ENCODE measurements at regions of chr7 and their contacts with region 1.

Region 1: GRCh38 chr7:24318326-24318725 is 34.3 kb downstream of the NPY start:
- DNase-seq: peak in 1 of 2 experiments; percentile 10
- H3K4me3 ChIP-seq: no peak overlapping the region
- H3K27ac ChIP-seq: no peak overlapping the region
- H3K4me1 ChIP-seq: peaks cover 0 to 6% (median 2%) of the 10 kb centered on the region in 4 experiments; a peak in 2 of 7 replicates
- H3K27me3 ChIP-seq: no peaks in the 10 kb centered on the region
- CTCF ChIP-seq: peak; percentile 75 to 94 (median 78)
- EP300 ChIP-seq: no peak
- POLR2A ChIP-seq: no peak
- RAD21 ChIP-seq: peak; percentile 96 to 97

Region 2: GRCh38 chr7:24216576-24217125 is 101.7 kb before region 1 on chr7:
- CTCF ChIA-PET with region 1: no interaction called
- POLR2A ChIA-PET with region 1: no interaction called
- DNase-seq: no peak
- H3K4me3 ChIP-seq: no peak overlapping the region
- H3K27ac ChIP-seq: no peak overlapping the region
- H3K4me1 ChIP-seq: no peaks in the 10 kb centered on the region
- H3K27me3 ChIP-seq: no peaks in the 10 kb centered on the region; a peak in 1 of 7 replicates
- CTCF ChIP-seq: no peak
- EP300 ChIP-seq: no peak
- POLR2A ChIP-seq: no peak
- RAD21 ChIP-seq: no peak

Region 3: DNA sequence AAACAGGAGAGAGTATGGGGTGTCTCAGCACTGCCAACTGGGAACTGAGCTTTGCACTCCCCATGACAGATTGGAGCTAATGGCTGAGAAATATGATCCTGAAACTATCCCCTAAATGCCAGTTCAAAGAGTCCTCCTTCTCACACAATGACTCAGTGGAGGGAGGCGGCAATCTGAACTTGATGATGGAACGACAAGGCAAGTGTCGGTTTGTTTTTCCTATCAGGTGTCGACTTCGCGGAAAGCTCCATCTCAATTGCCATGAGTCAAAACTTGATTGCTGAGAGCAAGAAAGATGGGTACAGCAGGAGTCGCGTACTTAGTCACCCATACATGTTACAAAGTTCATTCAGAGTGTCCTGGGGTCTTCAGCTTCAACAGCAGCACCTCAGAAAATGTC is 18.1 kb after region 1 on chr7:
- CTCF ChIA-PET with region 1: interaction called, 38 read pairs
- POLR2A ChIA-PET with region 1: interaction called, 6 read pairs
- DNase-seq: no peak
- H3K4me3 ChIP-seq: peak overlapping the region in 1 of 4 experiments; percentile 36; a peak in 1 of 8 replicates
- H3K27ac ChIP-seq: no peak overlapping the region
- H3K4me1 ChIP-seq: peaks cover 1 to 20% (median 16%) of the 10 kb centered on the region in 4 experiments; a peak in 6 of 7 replicates
- H3K27me3 ChIP-seq: peaks cover 0 to 13% (median 6%) of the 10 kb centered on the region in 4 experiments; a peak in 6 of 7 replicates
- CTCF ChIP-seq: no peak
- EP300 ChIP-seq: no peak
- POLR2A ChIP-seq: no peak
- RAD21 ChIP-seq: no peak

Region 4: GRCh38 chr7:24372948-24373511 is 54.7 kb after region 1 on chr7:
- CTCF ChIA-PET with region 1: interaction called, 14 read pairs
- POLR2A ChIA-PET with region 1: interaction called, 4 read pairs
- DNase-seq: no peak
- H3K4me3 ChIP-seq: no peak overlapping the region
- H3K27ac ChIP-seq: no peak overlapping the region
- H3K4me1 ChIP-seq: peaks cover 6 to 22% (median 10%) of the 10 kb centered on the region in 4 experiments
- H3K27me3 ChIP-seq: no peaks in the 10 kb centered on the region
- CTCF ChIP-seq: no peak
- EP300 ChIP-seq: no peak
- POLR2A ChIP-seq: no peak
- RAD21 ChIP-seq: no peak

Region 5: DNA sequence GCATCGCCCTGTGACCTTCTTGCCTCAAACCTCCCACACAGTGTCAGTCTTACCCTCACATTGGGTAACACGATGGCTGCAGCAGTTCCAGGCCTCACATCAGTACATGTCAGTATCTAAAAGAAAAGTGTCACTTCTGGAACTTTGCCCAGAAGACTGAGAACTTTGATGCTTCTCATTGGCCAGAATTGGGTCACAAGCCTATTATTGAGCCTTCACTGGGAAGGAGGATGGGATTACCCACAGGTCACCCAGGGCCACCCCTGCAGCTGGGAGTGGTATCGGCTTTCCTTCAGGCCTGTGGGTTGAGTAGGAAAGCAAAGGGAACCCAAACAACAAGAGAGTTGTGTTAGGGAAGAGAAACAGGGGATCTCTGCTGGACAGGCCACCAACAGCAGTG is 77.2 kb after region 1 on chr7:
- CTCF ChIA-PET with region 1: interaction called, 12 read pairs
- POLR2A ChIA-PET with region 1: interaction called, 10 read pairs
- DNase-seq: no peak
- H3K4me3 ChIP-seq: peak overlapping the region in 1 of 4 experiments; percentile 67; a peak in 1 of 8 replicates
- H3K27ac ChIP-seq: peak overlapping the region; percentile 54
- H3K4me1 ChIP-seq: peaks cover 1 to 27% (median 15%) of the 10 kb centered on the region in 4 experiments; a peak in 6 of 7 replicates
- H3K27me3 ChIP-seq: no peaks in the 10 kb centered on the region
- CTCF ChIP-seq: no peak
- EP300 ChIP-seq: no peak
- POLR2A ChIP-seq: no peak
- RAD21 ChIP-seq: no peak

Region 6: DNA sequence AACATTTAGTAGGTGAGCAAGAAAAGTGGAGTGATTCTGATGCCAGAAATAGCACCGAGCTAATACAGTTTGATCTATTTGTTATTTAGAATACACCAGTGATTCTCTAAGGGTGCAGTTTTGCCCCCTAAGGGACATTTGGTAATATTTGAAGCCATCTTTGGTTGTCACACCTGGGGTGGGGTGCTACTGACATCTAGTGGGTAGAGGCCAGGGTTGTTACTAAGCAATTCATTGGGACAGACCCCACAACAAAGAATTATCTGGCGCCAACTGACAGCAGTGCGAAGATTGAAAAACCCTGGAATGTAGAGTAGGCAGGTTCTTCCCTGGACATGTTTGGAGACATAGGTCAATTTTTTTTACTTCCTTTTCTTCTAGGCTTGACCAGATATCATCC is 269.5 kb after region 1 on chr7:
- CTCF ChIA-PET with region 1: interaction called, 10 read pairs
- POLR2A ChIA-PET with region 1: no interaction called
- DNase-seq: peak in 1 of 2 experiments; percentile 68
- H3K4me3 ChIP-seq: no peak overlapping the region
- H3K27ac ChIP-seq: no peak overlapping the region
- H3K4me1 ChIP-seq: peaks cover 0 to 4% (median 0%) of the 10 kb centered on the region in 4 experiments; a peak in 1 of 7 replicates
- H3K27me3 ChIP-seq: no peaks in the 10 kb centered on the region
- CTCF ChIP-seq: peak; percentile 38 to 94 (median 79)
- EP300 ChIP-seq: no peak
- POLR2A ChIP-seq: no peak
- RAD21 ChIP-seq: peak; percentile 95 to 96

Measured in H1 (cell line).